GM12878 (cell line): ENCODE measurements at regions of chr1 and their contacts with region 1.

Region 1: DNA sequence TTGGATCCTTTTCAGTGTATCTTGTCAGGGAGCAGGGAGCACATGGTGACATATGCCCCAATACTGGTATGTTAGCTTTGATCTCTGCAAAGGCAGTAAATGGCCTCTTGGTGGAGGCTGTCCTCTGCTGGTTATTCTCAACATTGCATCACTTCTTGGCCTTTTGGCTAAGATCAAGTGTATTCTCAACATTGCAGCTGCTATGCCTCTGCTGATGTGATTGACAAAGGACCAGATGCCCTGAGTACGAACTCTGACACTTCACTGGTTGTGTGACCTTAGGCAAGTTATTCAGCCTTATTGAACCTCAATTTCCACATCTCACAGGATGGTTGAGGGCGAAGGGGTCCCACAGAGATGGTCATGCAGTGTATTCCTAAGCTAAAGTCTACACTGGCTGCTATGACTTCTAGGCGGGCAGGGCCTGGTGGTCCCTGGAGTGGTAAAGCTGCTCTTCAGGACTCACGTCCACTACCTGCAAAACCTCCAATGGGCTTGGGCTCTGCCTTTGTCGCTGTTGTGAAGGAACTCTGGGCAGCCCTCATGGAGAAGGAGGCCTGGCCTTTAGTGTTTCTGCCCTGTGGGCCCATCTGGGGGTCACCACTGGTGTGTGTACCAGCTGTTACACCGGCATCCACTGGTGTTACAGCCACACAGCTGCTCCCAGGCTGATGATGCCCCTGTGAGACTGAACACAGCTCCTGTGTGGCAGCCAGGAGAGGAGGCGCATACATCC is 64.8 kb downstream of the DNTTIP2 start:
- DNase-seq: peak; percentile 40
- ATAC-seq: peak; percentile 92
- H3K4me3 ChIP-seq: no peak overlapping the region
- H3K27ac ChIP-seq: no peak overlapping the region
- H3K4me1 ChIP-seq: peaks cover 8% of the 10 kb centered on the region
- H3K27me3 ChIP-seq: no peaks in the 10 kb centered on the region; a peak in 1 of 4 replicates
- CTCF ChIP-seq: peak; percentile 97 to 99 (median 97); a peak in 5 of 6 replicates
- EP300 ChIP-seq: no peak
- POLR2A ChIP-seq: no peak
- RAD21 ChIP-seq: peak; percentile 100

Region 2: GRCh38 chr1:93304716-93305138 is 509.5 kb before region 1 on chr1:
- CTCF ChIA-PET with region 1: interaction called, 27 read pairs
- POLR2A ChIA-PET with region 1: no interaction called
- RAD21 ChIA-PET with region 1: interaction called, 30 read pairs
- SMC1A ChIA-PET with region 1: interaction called, 25 read pairs
- in situ Hi-C with region 1: no loop called
- intact Hi-C with region 1: no loop called
- DNase-seq: peak; percentile 12
- ATAC-seq: peak; percentile 82
- H3K4me3 ChIP-seq: no peak overlapping the region
- H3K27ac ChIP-seq: no peak overlapping the region
- H3K4me1 ChIP-seq: no peaks in the 10 kb centered on the region
- H3K27me3 ChIP-seq: no peaks in the 10 kb centered on the region
- CTCF ChIP-seq: peak; percentile 72 to 89 (median 88)
- EP300 ChIP-seq: no peak
- POLR2A ChIP-seq: no peak
- RAD21 ChIP-seq: peak; percentile 92

Region 3: GRCh38 chr1:93616996-93617669 is 197.1 kb before region 1 on chr1:
- CTCF ChIA-PET with region 1: interaction called, 13 read pairs
- POLR2A ChIA-PET with region 1: no interaction called
- RAD21 ChIA-PET with region 1: interaction called, 24 read pairs
- SMC1A ChIA-PET with region 1: interaction called, 10 read pairs
- in situ Hi-C with region 1: no loop called
- intact Hi-C with region 1: no loop called
- DNase-seq: no peak
- ATAC-seq: no peak
- H3K4me3 ChIP-seq: no peak overlapping the region
- H3K27ac ChIP-seq: no peak overlapping the region
- H3K4me1 ChIP-seq: peaks cover 25% of the 10 kb centered on the region
- H3K27me3 ChIP-seq: peaks cover 0 to 2% of the 10 kb centered on the region in 2 experiments; a peak in 3 of 4 replicates
- CTCF ChIP-seq: no peak
- EP300 ChIP-seq: no peak
- POLR2A ChIP-seq: no peak
- RAD21 ChIP-seq: no peak

Region 4: DNA sequence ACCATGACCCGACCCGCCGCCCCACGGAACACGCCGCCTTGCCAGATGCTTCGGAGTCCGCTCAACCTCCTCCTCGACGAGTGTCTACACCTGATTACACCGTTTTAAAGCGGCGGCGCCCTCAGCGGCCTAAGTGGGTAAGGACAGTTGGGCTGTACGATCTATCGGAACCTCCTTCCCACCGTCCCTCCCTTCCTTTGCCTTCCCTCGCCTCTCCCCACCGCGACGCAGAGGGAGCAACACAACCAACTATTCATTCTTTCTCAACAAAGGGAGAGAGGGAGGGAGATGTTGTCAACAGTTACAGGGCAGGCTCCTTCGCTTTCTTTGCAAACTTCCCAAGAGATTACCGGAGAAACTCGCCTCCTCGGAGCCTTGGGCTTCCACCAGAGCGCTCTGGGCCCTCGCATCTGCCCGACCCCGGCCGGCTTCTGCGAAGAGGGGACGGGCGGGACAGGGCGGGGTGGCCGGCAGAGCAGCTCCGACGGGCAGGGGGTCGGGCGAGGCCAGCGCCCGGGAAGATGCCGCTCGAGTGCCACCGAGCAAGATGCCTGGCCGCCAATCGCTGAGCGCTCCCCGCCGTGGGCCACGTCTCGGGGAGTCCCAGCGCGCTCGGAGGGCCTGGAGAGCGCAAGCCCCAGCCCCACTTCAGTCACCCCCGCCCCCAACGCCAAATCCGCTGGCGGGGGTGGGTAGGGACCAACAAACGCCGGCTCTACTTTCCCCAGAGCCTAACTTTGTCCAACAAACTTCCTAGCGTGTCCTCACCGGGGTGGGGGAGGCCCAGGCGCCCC is 133.3 kb before region 1 on chr1:
- CTCF ChIA-PET with region 1: interaction called, 30 read pairs
- POLR2A ChIA-PET with region 1: no interaction called
- RAD21 ChIA-PET with region 1: interaction called, 13 read pairs
- SMC1A ChIA-PET with region 1: interaction called, 14 read pairs
- in situ Hi-C with region 1: no loop called
- intact Hi-C with region 1: no loop called
- DNase-seq: no peak
- ATAC-seq: peak; percentile 82
- H3K4me3 ChIP-seq: peak overlapping the region; percentile 87
- H3K27ac ChIP-seq: no peak overlapping the region
- H3K4me1 ChIP-seq: peaks cover 13% of the 10 kb centered on the region; the same call in 1 of the 2 replicates
- H3K27me3 ChIP-seq: peaks cover 0 to 4% of the 10 kb centered on the region in 2 experiments; a peak in 2 of 4 replicates
- CTCF ChIP-seq: peak; percentile 46 to 66 (median 52); a peak in 5 of 6 replicates
- EP300 ChIP-seq: no peak
- POLR2A ChIP-seq: no peak
- RAD21 ChIP-seq: peak; percentile 51; the same call in 1 of the 2 replicates

Region 5: DNA sequence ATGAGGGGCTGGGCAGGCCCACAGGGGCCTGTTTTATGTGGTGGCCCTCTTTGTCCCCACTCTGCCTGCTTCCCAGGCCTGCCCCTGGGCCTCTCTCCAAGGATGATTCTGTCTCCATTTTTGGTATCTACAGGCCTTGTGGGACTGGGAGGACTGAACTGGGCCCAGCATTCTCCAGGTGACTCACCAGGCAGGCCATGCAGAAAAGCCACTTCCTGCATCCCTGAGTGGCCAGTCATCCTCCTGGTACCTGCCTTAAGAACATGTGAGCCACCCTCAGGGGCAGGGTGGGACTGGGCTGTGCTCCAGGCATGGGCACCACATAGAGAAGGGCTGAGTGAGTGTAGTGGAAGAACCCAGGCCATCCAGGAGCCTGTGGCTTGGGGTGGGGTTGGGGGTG is 112.6 kb before region 1 on chr1:
- CTCF ChIA-PET with region 1: interaction called, 12 read pairs
- POLR2A ChIA-PET with region 1: no interaction called
- RAD21 ChIA-PET with region 1: interaction called, 9 read pairs
- SMC1A ChIA-PET with region 1: interaction called, 12 read pairs
- in situ Hi-C with region 1: no loop called
- intact Hi-C with region 1: no loop called
- DNase-seq: no peak
- ATAC-seq: peak; percentile 45
- H3K4me3 ChIP-seq: no peak overlapping the region
- H3K27ac ChIP-seq: peak overlapping the region; percentile 63
- H3K4me1 ChIP-seq: peaks cover 54% of the 10 kb centered on the region
- H3K27me3 ChIP-seq: no peaks in the 10 kb centered on the region
- CTCF ChIP-seq: no peak
- EP300 ChIP-seq: no peak
- POLR2A ChIP-seq: no peak
- RAD21 ChIP-seq: no peak

Region 6: DNA sequence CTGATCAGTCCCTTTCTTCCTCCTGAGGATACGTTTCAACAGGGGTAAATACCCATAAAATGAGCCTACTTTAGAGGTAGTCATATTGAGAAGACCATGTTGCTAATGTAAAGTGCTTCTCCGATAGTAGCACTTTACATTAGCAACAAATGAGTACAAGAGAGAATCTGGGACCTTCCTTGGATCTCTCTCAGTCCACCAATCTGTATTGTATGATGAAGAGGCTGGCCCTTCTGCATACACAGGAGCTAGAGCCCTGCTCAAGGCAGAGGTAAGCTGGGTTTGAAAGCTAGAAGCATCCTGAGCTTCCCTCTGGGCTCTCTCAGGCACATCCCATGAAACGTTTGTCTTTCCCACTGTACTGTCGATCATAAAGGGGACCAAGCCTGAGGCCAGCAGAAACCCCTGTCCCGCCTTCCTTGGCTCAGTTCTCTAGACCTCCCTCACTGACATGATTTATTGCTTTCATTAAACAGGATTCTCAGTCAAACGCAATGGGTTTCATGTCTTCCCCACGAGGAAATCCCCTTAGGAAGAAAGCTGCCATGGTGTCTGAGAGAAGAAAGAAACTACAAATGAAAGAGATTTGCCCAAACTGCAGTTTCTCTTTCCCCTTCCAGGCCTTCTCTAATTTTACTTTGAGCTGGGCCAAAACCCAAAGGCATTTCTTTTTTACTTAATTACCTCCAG is 69.8 kb before region 1 on chr1:
- CTCF ChIA-PET with region 1: interaction called, 26 read pairs
- POLR2A ChIA-PET with region 1: no interaction called
- RAD21 ChIA-PET with region 1: interaction called, 23 read pairs
- SMC1A ChIA-PET with region 1: interaction called, 18 read pairs
- in situ Hi-C with region 1: no loop called
- intact Hi-C with region 1: no loop called
- DNase-seq: peak; percentile 16
- ATAC-seq: peak; percentile 78
- H3K4me3 ChIP-seq: no peak overlapping the region
- H3K27ac ChIP-seq: no peak overlapping the region
- H3K4me1 ChIP-seq: peaks cover 17% of the 10 kb centered on the region
- H3K27me3 ChIP-seq: no peaks in the 10 kb centered on the region
- CTCF ChIP-seq: no peak
- EP300 ChIP-seq: no peak
- POLR2A ChIP-seq: no peak
- RAD21 ChIP-seq: no peak

Region 7: GRCh38 chr1:93784538-93784937 is 29.7 kb before region 1 on chr1:
- CTCF ChIA-PET with region 1: interaction called, 6 read pairs
- POLR2A ChIA-PET with region 1: no interaction called
- RAD21 ChIA-PET with region 1: interaction called, 3 read pairs
- SMC1A ChIA-PET with region 1: interaction called, 13 read pairs
- in situ Hi-C with region 1: no loop called
- intact Hi-C with region 1: no loop called
- DNase-seq: no peak
- ATAC-seq: no peak
- H3K4me3 ChIP-seq: no peak overlapping the region
- H3K27ac ChIP-seq: no peak overlapping the region
- H3K4me1 ChIP-seq: no peaks in the 10 kb centered on the region
- H3K27me3 ChIP-seq: 0 out of 4 replicates have a peak, but pooled peaks cover 0 to 3% of the 10 kb centered on the region in 2 experiments
- CTCF ChIP-seq: no peak
- EP300 ChIP-seq: no peak
- POLR2A ChIP-seq: no peak
- RAD21 ChIP-seq: no peak

Region 8: GRCh38 chr1:94039514-94039870 is 225.3 kb after region 1 on chr1:
- CTCF ChIA-PET with region 1: no interaction called
- POLR2A ChIA-PET with region 1: no interaction called
- RAD21 ChIA-PET with region 1: no interaction called
- SMC1A ChIA-PET with region 1: no interaction called
- in situ Hi-C with region 1: no loop called
- intact Hi-C with region 1: no loop called
- DNase-seq: no peak
- ATAC-seq: peak; percentile 65
- H3K4me3 ChIP-seq: no peak overlapping the region
- H3K27ac ChIP-seq: no peak overlapping the region
- H3K4me1 ChIP-seq: peaks cover 6% of the 10 kb centered on the region; the same call in 1 of the 2 replicates
- H3K27me3 ChIP-seq: no peaks in the 10 kb centered on the region; a peak in 1 of 4 replicates
- CTCF ChIP-seq: peak; percentile 78 to 92 (median 86)
- EP300 ChIP-seq: no peak
- POLR2A ChIP-seq: no peak
- RAD21 ChIP-seq: peak; percentile 53